SK-N-SH (cell line): ENCODE measurements at regions of chr2 and their contacts with region 1.

Region 1: GRCh38 chr2:230987137-230988020 is 8.5 kb upstream of the SPATA3 start:
- DNase-seq: peak; percentile 96
- H3K4me3 ChIP-seq: peak overlapping the region; percentile 50 to 63
- H3K27ac ChIP-seq: no peak overlapping the region
- H3K4me1 ChIP-seq: peaks cover 0 to 5% of the 10 kb centered on the region in 2 experiments; a peak in 1 of 4 replicates
- H3K27me3 ChIP-seq: peaks cover 6% of the 10 kb centered on the region; the same call in 1 of the 2 replicates
- CTCF ChIP-seq: peak; percentile 84
- EP300 ChIP-seq: no peak
- RAD21 ChIP-seq: peak; percentile 92

Region 2: GRCh38 chr2:230589497-230590015 is 397.8 kb before region 1 on chr2:
- CTCF ChIA-PET with region 1: no interaction called
- POLR2A ChIA-PET with region 1: no interaction called
- DNase-seq: no peak
- H3K4me3 ChIP-seq: no peak overlapping the region
- H3K27ac ChIP-seq: no peak overlapping the region
- H3K4me1 ChIP-seq: no peaks in the 10 kb centered on the region
- H3K27me3 ChIP-seq: no peaks in the 10 kb centered on the region
- CTCF ChIP-seq: no peak
- EP300 ChIP-seq: no peak
- RAD21 ChIP-seq: no peak

Region 3: GRCh38 chr2:230830428-230830827 is 157.0 kb before region 1 on chr2:
- CTCF ChIA-PET with region 1: interaction called, 171 read pairs
- POLR2A ChIA-PET with region 1: no interaction called
- DNase-seq: no peak
- H3K4me3 ChIP-seq: no peak overlapping the region
- H3K27ac ChIP-seq: no peak overlapping the region
- H3K4me1 ChIP-seq: no peaks in the 10 kb centered on the region
- H3K27me3 ChIP-seq: peaks cover 7% of the 10 kb centered on the region; the same call in 1 of the 2 replicates
- CTCF ChIP-seq: no peak
- EP300 ChIP-seq: no peak
- RAD21 ChIP-seq: no peak

Region 4: GRCh38 chr2:230864598-230865306 is 122.6 kb before region 1 on chr2 and contains the start of gene ITM2C:
- CTCF ChIA-PET with region 1: interaction called, 15 read pairs
- POLR2A ChIA-PET with region 1: no interaction called
- DNase-seq: peak; percentile 98
- H3K4me3 ChIP-seq: peak within 1 kb of the TSS; percentile 89 to 95
- H3K27ac ChIP-seq: peak within 1 kb of the TSS in 1 of 2 experiments; percentile 86; a peak in 2 of 4 replicates
- H3K4me1 ChIP-seq: peaks cover 27 to 41% of the 10 kb centered on the region in 2 experiments
- H3K27me3 ChIP-seq: no peaks in the 10 kb centered on the region; the same call in 1 of the 2 replicates
- CTCF ChIP-seq: peak; percentile 54
- EP300 ChIP-seq: no peak
- RAD21 ChIP-seq: peak; percentile 39; the same call in 1 of the 2 replicates
- polyA plus RNA-seq, gene ITM2C: 288 and 290 TPM in 2 replicates

Region 5: GRCh38 chr2:230913406-230914143 is 73.8 kb before region 1 on chr2:
- CTCF ChIA-PET with region 1: interaction called, 25 read pairs
- POLR2A ChIA-PET with region 1: no interaction called
- DNase-seq: peak; percentile 85
- H3K4me3 ChIP-seq: no peak overlapping the region
- H3K27ac ChIP-seq: no peak overlapping the region
- H3K4me1 ChIP-seq: no peaks in the 10 kb centered on the region; a peak in 1 of 4 replicates
- H3K27me3 ChIP-seq: peaks cover 12% of the 10 kb centered on the region; the same call in 1 of the 2 replicates
- CTCF ChIP-seq: peak; percentile 58
- EP300 ChIP-seq: no peak
- RAD21 ChIP-seq: peak; percentile 89

Region 6: DNA sequence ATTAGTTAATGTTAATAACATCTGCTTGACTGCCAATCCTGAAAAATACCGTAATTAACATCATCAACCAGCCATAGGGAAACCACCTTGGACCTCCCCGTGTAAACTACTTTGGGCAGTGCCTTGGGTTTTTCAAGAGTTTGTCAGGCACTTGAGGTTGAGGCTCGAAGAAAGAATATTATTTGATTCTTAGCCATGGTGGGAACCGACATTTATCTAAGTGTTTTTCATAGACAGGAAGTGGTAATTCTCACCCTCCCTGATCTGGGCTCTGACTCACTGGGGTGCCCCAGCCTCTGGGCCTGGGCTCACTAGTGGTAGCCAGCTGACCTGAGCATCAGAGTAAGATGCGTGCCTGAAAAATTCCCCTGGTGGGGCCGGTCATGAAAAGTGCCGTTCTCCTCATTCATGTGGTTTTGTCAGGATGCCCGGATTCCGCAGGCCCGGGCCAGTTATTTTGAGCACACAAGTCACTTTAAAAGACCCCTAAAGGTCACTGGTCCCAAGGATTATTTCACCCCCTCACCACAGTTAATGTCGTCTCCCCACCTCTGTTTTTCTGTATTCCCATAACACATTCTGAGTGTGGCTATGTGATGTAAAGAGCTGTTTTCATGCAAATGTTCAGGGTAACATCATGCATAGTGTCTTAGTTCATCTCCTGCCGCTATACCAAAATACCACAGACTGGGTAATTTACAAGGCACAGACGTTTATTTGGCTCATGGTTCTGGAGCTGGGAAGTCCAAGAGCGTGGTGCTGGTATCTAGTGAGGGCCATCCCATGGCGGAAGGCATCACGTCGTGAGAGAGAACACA is 13.1 kb before region 1 on chr2:
- CTCF ChIA-PET with region 1: interaction called, 19 read pairs
- POLR2A ChIA-PET with region 1: no interaction called
- DNase-seq: no peak
- H3K4me3 ChIP-seq: no peak overlapping the region
- H3K27ac ChIP-seq: no peak overlapping the region
- H3K4me1 ChIP-seq: no peaks in the 10 kb centered on the region
- H3K27me3 ChIP-seq: 0 out of 2 replicates have a peak, but pooled peaks cover 7% of the 10 kb centered on the region
- CTCF ChIP-seq: no peak
- EP300 ChIP-seq: no peak
- RAD21 ChIP-seq: no peak